Activated CD4-positive, alpha-beta T cell treated with anti-CD3 and anti-CD28 coated beads for 36 hours (primary cell): ENCODE measurements at regions of chr11 and their contacts with region 1.

Region 1: DNA sequence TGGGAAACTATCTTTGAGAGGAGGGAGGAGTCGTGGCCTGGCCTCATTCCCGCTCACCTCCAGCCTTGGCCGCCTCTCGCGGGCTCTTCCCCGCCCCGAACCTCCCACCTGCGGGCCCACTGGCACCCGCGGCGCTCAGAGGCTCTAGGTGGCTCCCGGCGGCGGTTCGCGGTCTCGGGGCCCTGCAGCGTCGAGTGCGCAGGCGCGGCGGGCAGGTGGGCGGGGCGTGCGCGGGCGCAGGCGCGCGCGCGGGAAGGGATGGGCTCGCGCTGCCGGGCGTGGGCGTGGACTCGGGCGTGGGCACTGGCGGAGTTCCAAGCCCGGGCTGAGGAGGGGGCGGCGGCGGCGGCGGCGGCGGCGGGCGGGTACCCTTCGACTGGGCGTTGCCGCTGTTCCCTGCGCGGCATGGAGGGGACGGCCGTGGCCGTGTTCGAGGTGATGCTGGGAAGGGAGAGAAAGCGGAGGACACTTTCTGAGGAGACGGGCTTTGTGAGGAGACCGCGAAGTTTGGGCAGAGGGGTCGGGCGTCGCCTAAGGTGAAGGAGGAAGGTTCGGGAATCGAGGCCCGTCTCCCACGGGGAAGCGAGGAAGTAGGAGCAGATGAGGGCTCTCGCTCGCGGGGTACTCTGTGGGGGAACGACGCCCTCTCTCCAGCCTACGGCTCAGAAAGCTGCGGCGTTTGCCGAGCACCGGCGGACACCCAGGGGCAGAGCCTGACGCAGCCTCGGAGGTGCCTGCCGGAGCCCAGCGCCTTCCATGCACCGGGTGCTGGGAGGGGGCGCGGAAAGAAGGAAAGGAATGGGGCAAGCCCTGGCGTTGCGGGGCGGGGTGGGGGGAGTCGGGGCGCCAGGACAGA is 15.7 kb upstream of the SPTBN2 start:
- DNase-seq: peak; percentile 93
- ATAC-seq: peak; percentile 88
- H3K4me3 Mint-ChIP-seq: peak overlapping the region; percentile 95
- H3K27ac Mint-ChIP-seq: peak overlapping the region; percentile 84
- H3K4me1 Mint-ChIP-seq: peaks cover 7% of the 10 kb centered on the region
- H3K27me3 Mint-ChIP-seq: no peaks in the 10 kb centered on the region

Region 2: DNA sequence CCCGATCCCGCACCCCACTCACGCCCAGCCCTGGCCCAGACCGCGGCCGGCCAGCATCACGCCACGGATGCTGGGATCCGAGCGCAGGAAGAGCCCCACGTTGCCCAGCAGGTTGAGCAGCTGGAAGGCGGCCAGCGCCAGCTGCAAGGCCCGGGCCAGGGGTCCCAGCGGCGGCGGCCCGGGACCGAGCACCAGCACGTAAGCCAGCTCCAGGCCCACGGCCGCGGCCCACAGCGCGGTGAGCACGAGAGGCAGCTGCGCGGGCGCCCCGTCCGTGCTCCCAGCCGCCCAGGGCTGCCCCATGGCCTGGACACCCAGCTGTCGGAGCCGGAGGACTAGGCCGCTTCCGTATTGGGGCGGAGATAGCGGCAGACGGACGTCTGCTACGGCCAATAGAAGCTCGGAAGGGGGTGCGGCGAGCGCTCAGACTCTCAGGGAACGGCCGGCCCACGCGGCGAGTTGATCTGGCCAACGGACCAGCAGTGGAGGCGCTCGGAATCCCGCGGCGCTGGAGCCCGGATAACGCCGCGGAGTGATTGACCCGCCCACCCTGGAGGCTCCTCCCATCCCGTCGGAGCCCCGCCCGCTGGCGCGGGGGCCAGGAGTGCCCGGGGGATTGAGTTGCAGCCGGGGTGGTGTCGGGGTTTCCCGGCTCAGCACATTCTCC is 198.9 kb before region 1 on chr11 and contains the start of gene ZDHHC24:
- CTCF ChIA-PET with region 1: no interaction called
- POLR2A ChIA-PET with region 1: no interaction called
- intact Hi-C with region 1: loop called in 1 of 2 experiments (anchors 1 kb)
- DNase-seq: peak; percentile 95
- ATAC-seq: peak; percentile 94
- H3K4me3 Mint-ChIP-seq: peak within 1 kb of the TSS; percentile 76
- H3K27ac Mint-ChIP-seq: peak within 1 kb of the TSS; percentile 67
- H3K4me1 Mint-ChIP-seq: peaks cover 20% of the 10 kb centered on the region
- H3K27me3 Mint-ChIP-seq: peaks cover 5% of the 10 kb centered on the region
- total RNA-seq, gene ZDHHC24: 9.7 to 11.3 TPM

Region 3: GRCh38 chr11:66638177-66639065 is 106.3 kb before region 1 on chr11 and contains the start of gene RBM4:
- CTCF ChIA-PET with region 1: interaction called, 4 read pairs
- POLR2A ChIA-PET with region 1: no interaction called
- intact Hi-C with region 1: loop called in 1 of 2 experiments (anchors 1 kb)
- DNase-seq: peak; percentile 97
- ATAC-seq: peak; percentile 95
- H3K4me3 Mint-ChIP-seq: peak within 1 kb of the TSS; percentile 89
- H3K27ac Mint-ChIP-seq: peak within 1 kb of the TSS; percentile 97
- H3K4me1 Mint-ChIP-seq: peaks cover 65% of the 10 kb centered on the region
- H3K27me3 Mint-ChIP-seq: no peaks in the 10 kb centered on the region
- total RNA-seq, gene RBM4: 104 to 122 TPM

Region 4: GRCh38 chr11:66727282-66727882 is 17.3 kb before region 1 on chr11:
- CTCF ChIA-PET with region 1: interaction called, 6 read pairs
- POLR2A ChIA-PET with region 1: no interaction called
- intact Hi-C with region 1: loop called in 1 of 2 experiments (anchors 1 kb)
- DNase-seq: peak; percentile 45
- ATAC-seq: peak; percentile 47
- H3K4me3 Mint-ChIP-seq: peak overlapping the region; percentile 56
- H3K27ac Mint-ChIP-seq: no peak overlapping the region
- H3K4me1 Mint-ChIP-seq: peaks cover 11% of the 10 kb centered on the region
- H3K27me3 Mint-ChIP-seq: peaks cover 44% of the 10 kb centered on the region

Region 5: GRCh38 chr11:66868726-66869566 is 124.2 kb after region 1 on chr11:
- CTCF ChIA-PET with region 1: no interaction called
- POLR2A ChIA-PET with region 1: no interaction called
- intact Hi-C with region 1: loop called in 1 of 2 experiments (anchors 1 kb)
- DNase-seq: peak; percentile 93
- ATAC-seq: peak; percentile 97
- H3K4me3 Mint-ChIP-seq: no peak overlapping the region
- H3K27ac Mint-ChIP-seq: peak overlapping the region; percentile 51
- H3K4me1 Mint-ChIP-seq: peaks cover 16% of the 10 kb centered on the region
- H3K27me3 Mint-ChIP-seq: no peaks in the 10 kb centered on the region

Region 6: DNA sequence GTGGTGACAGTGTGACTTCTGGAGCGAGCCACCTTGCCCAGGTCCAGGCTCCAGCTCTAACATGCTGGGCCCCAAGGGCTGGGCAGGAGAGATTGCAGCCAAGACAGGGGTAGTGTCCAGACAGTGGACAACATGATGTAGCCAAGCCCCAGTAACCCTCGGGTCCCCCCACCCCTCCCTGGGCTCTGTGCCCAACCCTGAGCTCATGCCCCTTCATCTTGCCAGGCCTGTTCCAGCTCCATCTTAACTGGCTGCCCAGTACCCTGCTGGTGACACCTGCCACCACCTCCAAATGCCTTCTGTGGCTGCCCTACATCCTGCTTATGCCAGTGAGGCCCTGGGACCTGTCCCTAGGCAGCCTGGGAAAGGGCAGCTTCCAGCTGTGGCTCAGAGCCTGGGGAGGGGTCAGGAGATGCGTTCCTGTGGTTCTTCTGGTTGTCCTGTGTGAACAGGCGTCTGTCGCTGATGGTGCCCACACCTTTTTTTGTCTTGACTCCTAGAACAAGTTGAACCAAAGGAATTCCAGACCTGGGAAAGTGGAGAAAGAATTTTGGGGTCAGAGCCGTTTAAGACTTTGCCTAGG is 265.7 kb after region 1 on chr11:
- CTCF ChIA-PET with region 1: no interaction called
- POLR2A ChIA-PET with region 1: no interaction called
- intact Hi-C with region 1: no loop called
- DNase-seq: no peak
- ATAC-seq: no peak
- H3K4me3 Mint-ChIP-seq: no peak overlapping the region
- H3K27ac Mint-ChIP-seq: no peak overlapping the region
- H3K4me1 Mint-ChIP-seq: no peaks in the 10 kb centered on the region
- H3K27me3 Mint-ChIP-seq: no peaks in the 10 kb centered on the region